Endothelial cell of umbilical vein (primary cell): ENCODE measurements at regions of chr10 and their contacts with region 1.

Region 1: DNA sequence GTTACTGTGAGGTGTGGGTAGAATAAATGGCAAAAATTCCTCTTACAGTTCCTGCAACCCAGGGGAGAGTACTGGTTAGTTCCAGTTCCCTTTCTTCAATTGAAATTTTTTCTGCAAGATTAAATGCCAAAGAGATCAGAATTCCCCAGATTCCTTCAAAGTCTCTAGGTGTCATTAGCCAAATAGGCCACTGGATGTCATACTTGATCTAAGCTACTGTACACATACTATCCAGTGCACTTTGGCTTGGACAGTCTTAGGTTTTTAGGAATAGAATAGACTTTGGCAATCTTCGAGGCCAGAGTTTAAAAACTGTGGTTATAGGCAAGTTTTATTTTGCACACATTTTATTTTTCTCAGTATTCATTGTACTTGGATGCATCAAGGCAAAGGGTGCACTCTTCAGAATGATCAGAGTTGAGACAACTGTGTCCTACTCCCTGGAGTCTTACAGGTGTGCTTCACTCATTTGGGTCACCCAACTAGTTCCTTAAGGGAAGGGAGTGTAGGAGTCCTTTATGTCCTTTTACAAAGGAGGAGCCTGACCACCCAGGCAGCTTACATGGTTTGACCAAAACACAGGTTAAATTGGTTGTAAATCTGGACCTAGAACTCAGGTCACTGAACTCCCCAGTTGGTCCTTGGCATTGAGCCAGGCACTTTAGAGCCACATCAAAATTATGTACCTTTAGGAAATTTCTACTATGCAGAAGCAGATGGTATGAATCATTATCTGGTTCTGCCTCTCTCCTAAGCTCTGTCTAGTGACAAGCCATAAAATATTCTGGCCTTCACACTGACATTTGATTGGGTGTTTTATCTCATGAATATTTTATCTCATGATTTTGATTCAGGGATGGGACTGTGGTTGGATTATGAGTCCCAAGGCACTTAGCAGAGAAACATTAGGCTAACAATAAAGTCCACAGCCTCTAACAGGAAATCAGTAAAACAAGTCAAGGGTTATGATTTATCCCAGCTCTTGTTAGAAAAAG is 49.5 kb downstream of the ASAH2B start:
- DNase-seq: peak; percentile 29
- H3K4me3 ChIP-seq: no peak overlapping the region
- H3K27ac ChIP-seq: no peak overlapping the region
- H3K4me1 ChIP-seq: no peaks in the 10 kb centered on the region
- H3K27me3 ChIP-seq: peaks cover 0 to 2% of the 10 kb centered on the region in 2 experiments
- CTCF ChIP-seq: peak in 1 of 2 donors; percentile 40
- POLR2A ChIP-seq: no peak

Region 2: GRCh38 chr10:50470345-50470744 is 318.9 kb before region 1 on chr10:
- CTCF ChIA-PET with region 1: no interaction called
- POLR2A ChIA-PET with region 1: no interaction called
- dilution Hi-C with region 1: no loop called
- intact Hi-C with region 1: no loop called
- DNase-seq: no peak
- H3K4me3 ChIP-seq: no peak overlapping the region
- H3K27ac ChIP-seq: no peak overlapping the region
- H3K4me1 ChIP-seq: no peaks in the 10 kb centered on the region
- H3K27me3 ChIP-seq: no peaks in the 10 kb centered on the region
- CTCF ChIP-seq: no peak
- POLR2A ChIP-seq: no peak

Region 3: GRCh38 chr10:50527442-50528043 is 261.7 kb before region 1 on chr10:
- CTCF ChIA-PET with region 1: no interaction called
- POLR2A ChIA-PET with region 1: no interaction called
- dilution Hi-C with region 1: no loop called
- intact Hi-C with region 1: no loop called
- DNase-seq: no peak
- H3K4me3 ChIP-seq: no peak overlapping the region
- H3K27ac ChIP-seq: no peak overlapping the region
- H3K4me1 ChIP-seq: no peaks in the 10 kb centered on the region
- H3K27me3 ChIP-seq: no peaks in the 10 kb centered on the region
- CTCF ChIP-seq: no peak
- POLR2A ChIP-seq: no peak

Region 4: DNA sequence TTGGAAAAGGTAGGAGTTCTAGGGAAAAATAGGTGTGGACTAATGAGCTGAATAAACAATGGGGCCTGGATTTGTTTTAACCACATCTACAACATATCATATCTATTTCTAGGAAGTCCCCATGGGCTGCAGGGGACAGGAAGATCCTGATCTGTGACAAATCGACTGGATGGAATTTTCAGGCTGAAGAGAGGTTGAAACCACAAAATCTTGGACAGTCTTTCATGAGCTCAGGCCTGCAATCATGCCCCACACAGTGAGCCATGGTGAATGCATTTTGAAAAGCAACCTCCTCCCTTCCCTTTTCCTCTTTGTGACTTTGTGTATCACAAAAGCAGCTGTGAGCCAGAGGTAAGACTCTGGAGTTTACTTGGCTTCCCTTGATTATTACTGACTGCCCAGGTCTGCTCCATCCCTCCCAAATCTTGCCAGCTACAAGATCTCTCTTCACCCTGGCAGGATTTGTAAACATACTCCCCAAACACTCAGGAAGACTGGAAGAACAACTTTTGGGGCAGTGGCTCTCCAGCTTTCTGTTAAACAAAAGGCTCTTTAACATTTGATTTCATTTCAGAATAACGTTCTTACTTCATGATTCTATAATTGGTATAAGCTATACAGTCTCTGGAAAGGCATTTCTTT is 16.9 kb after region 1 on chr10:
- CTCF ChIA-PET with region 1: interaction called, 12 read pairs
- POLR2A ChIA-PET with region 1: no interaction called
- dilution Hi-C with region 1: no loop called
- intact Hi-C with region 1: no loop called
- DNase-seq: no peak
- H3K4me3 ChIP-seq: no peak overlapping the region
- H3K27ac ChIP-seq: no peak overlapping the region
- H3K4me1 ChIP-seq: no peaks in the 10 kb centered on the region
- H3K27me3 ChIP-seq: peaks cover 2 to 18% of the 10 kb centered on the region in 2 experiments
- CTCF ChIP-seq: no peak
- POLR2A ChIP-seq: no peak

Region 5: DNA sequence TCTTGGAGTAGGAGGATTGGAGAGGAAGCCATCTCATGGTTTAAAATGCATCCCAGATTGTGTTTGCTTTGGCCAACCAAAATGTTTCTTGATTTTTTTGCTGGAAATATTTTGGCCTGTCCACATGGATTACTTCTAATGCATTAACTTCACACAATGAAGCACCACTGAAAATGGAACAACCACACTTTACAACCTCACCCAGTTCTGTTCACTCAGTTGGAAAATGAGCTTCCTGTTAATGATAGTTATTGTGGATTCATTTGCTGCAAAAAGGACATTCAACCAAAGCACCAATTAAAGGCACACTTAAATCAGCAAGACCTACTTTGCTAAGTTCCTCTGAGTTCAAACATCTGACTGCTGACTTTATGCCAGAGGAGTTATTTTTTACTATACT is 107.5 kb after region 1 on chr10:
- CTCF ChIA-PET with region 1: interaction called, 99 read pairs
- POLR2A ChIA-PET with region 1: no interaction called
- dilution Hi-C with region 1: no loop called
- intact Hi-C with region 1: loop called (anchors 1 kb)
- DNase-seq: no peak
- H3K4me3 ChIP-seq: no peak overlapping the region
- H3K27ac ChIP-seq: no peak overlapping the region
- H3K4me1 ChIP-seq: no peaks in the 10 kb centered on the region
- H3K27me3 ChIP-seq: peaks cover 9 to 11% of the 10 kb centered on the region in 2 experiments
- CTCF ChIP-seq: no peak
- POLR2A ChIP-seq: no peak

Region 6: DNA sequence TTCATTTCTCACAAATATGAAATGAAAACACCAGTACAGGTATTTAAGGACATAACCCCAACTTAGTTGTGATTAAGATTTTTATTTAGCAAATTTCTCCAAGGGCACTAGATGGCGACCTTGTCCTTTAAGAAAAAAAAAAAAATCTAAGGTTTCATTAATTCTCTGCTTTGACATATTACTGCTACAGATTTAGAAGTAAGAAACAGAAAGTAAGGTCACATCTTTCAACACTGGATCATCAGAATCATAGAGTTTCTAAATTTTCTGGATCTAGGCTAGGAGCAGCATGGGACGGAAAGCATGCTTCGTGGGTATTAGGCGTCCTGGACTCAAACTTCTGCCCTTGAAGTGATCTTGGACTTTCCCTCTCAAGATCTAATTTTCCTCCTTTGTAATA is 199.5 kb after region 1 on chr10:
- CTCF ChIA-PET with region 1: no interaction called
- POLR2A ChIA-PET with region 1: no interaction called
- dilution Hi-C with region 1: no loop called
- intact Hi-C with region 1: loop called (anchors 5 kb)
- DNase-seq: peak; percentile 33
- H3K4me3 ChIP-seq: no peak overlapping the region
- H3K27ac ChIP-seq: no peak overlapping the region
- H3K4me1 ChIP-seq: peaks cover 6% of the 10 kb centered on the region
- H3K27me3 ChIP-seq: peaks cover 24 to 44% of the 10 kb centered on the region in 2 experiments
- CTCF ChIP-seq: peak; percentile 13 to 18
- POLR2A ChIP-seq: no peak

Region 7: GRCh38 chr10:51001587-51001986 is 212.3 kb after region 1 on chr10:
- CTCF ChIA-PET with region 1: interaction called, 3 read pairs
- POLR2A ChIA-PET with region 1: no interaction called
- dilution Hi-C with region 1: no loop called
- intact Hi-C with region 1: loop called (anchors 2 kb)
- DNase-seq: peak; percentile 36
- H3K4me3 ChIP-seq: no peak overlapping the region
- H3K27ac ChIP-seq: no peak overlapping the region
- H3K4me1 ChIP-seq: no peaks in the 10 kb centered on the region
- H3K27me3 ChIP-seq: peaks cover 0 to 15% of the 10 kb centered on the region in 2 experiments
- CTCF ChIP-seq: peak; percentile 17 to 40
- POLR2A ChIP-seq: no peak